HepG2 (cell line): ENCODE measurements at regions of chr17 and their contacts with region 1.

Region 1: GRCh38 chr17:47698749-47699535 is 5.0 kb downstream of the TBKBP1 start:
- DNase-seq: no peak
- ATAC-seq: peak; percentile 51
- H3K4me3 ChIP-seq: no peak overlapping the region
- H3K27ac ChIP-seq: no peak overlapping the region
- H3K4me1 ChIP-seq: peaks cover 18% of the 10 kb centered on the region
- H3K27me3 ChIP-seq: no peaks in the 10 kb centered on the region
- CTCF ChIP-seq: peak; percentile 87
- EP300 ChIP-seq: no peak
- POLR2A ChIP-seq: no peak
- RAD21 ChIP-seq: peak; percentile 55; the same call in 1 of the 2 replicates

Region 2: DNA sequence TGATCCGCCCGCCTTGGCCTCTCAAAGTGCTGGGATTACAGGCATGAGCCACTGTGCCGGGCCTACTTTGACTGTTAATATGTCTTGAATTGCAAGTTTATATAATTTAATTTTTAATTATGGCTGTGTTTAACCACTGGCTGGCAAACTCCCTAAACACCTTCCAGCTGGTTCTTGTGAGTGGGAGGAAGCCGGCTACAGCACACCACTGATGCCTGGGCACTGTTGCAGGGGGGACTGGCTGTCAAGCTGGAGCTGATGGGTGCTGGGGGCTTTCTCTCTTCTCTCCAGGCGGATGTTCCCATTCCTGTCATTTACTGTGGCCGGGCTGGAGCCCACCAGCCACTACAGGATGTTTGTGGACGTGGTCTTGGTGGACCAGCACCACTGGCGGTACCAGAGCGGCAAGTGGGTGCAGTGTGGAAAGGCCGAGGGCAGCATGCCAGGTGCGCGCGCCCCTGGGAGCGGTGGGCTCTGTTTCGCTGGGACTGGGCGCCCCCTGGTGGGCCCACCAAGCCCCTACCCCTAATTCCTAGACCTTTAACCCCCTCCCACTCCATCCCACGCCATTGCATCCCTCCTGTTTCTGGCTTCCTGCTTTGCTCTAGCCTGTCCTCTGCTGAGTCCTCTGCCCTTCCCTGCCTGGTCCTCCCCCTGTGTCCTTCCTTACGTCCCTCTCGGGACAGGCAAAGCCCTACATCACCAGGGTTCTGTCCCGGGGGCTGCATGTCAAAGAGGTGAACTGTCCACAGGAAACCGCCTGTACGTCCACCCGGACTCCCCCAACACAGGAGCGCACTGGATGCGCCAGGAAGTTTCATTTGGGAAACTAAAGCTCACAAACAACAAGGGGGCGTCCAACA is 43.6 kb after region 1 on chr17:
- CTCF ChIA-PET with region 1: interaction called, 5 read pairs
- POLR2A ChIA-PET with region 1: no interaction called
- in situ Hi-C with region 1: no loop called
- intact Hi-C with region 1: loop called (anchors 2 kb)
- DNase-seq: peak; percentile 35
- ATAC-seq: peak; percentile 85
- H3K4me3 ChIP-seq: no peak overlapping the region; a peak in 1 of 6 replicates
- H3K27ac ChIP-seq: no peak overlapping the region
- H3K4me1 ChIP-seq: peaks cover 12% of the 10 kb centered on the region; the same call in 1 of the 2 replicates
- H3K27me3 ChIP-seq: peaks cover 2 to 74% of the 10 kb centered on the region in 2 experiments; a peak in 4 of 5 replicates
- CTCF ChIP-seq: peak; percentile 90
- EP300 ChIP-seq: no peak
- POLR2A ChIP-seq: no peak
- RAD21 ChIP-seq: peak; percentile 83